ENCODE measurements at regions of chr16 and their contacts with region 1.

Region 1: DNA sequence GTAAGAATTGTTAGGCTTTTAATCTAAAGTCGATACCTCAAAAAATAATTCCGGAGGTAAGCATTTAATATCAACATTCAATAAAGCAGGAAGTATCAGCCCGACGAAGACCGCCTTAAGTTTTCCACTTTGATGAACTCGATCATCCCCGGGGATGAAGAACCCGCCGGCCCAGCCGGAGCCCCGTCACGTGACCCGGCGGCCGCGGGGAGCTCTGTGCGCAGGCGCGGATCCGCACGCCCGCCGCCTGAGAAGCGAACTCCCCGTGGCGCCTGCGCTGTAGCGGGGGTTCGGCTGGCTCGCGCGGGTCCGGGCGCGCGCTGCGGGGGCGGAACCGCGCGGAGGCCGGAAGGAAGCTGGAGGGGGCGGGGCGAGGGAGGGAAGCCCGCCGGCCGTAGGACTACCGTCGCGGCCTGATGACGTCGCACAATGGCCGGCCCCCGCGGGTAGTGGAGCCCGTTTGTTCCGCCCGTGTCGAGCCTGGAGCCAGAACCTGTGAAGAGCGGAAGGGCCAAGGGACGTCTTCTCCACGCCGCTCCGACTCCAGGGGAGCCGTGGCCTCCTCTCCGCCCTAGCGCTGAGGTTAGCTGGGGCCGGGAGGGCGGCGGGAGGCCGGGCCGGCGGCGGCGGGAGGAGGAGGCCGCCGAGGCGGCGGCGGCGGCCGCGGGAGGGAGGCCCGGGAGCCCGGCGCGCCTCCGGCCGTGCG is at the start of gene ZC3H18:
- DNase-seq: peak; percentile 95
- H3K4me3 ChIP-seq: peak within 1 kb of the TSS; percentile 65 to 87
- H3K27ac ChIP-seq: peak within 1 kb of the TSS; percentile 2 to 86
- H3K4me1 ChIP-seq: peaks cover 5% of the 10 kb centered on the region
- H3K27me3 ChIP-seq: no peaks in the 10 kb centered on the region
- CTCF ChIP-seq: no peak
- POLR2A ChIP-seq: no peak
- total RNA-seq, gene ZC3H18: 53.8 to 63.7 TPM

Region 2: DNA sequence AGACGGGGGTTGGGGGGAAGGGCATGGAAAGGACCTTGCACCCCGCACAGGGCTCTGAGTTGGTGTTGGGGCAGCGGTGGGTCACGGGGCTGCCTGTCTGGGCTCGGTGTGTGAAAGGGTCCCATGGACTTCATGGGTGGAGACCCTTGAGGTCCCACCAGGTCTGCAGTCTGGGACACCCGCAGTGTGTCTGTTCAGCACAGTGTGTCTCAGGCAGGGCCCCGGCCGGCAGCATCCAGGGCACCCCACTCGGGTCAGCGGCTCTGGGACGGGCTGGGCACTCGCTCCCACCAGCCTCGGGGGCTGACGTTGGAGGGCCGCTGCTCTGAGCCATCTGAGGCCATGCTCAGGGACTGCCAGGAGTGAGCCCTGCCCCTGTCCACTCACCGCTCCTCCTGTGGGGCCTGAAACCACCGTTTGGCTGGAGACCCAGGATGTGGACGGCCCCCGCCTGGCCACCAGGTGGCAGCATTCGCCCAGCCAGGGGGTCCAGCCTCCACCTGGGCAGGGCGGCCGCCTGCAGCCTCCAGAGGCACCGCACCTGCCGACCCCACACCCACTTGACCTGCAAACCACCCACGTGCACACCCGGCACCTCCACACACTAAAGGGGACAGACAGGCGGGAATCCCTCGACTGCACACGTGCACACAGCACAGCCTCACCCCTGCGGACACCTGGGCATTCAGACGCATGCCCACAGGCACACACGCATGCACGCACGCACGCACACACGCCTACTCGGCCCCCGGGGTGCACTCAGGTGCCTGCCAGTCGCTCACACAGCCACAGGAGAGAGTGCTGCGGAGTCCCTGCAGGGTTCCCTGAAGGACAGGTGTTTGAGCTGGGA is 127.2 kb before region 1 on chr16:
- intact Hi-C with region 1: loop called (anchors 10 kb)
- DNase-seq: peak; percentile 72
- H3K4me3 ChIP-seq: no peak overlapping the region
- H3K27ac ChIP-seq: no peak overlapping the region
- H3K4me1 ChIP-seq: peaks cover 5% of the 10 kb centered on the region
- H3K27me3 ChIP-seq: no peaks in the 10 kb centered on the region
- CTCF ChIP-seq: peak; percentile 94 to 97 (median 95)
- POLR2A ChIP-seq: no peak

Region 3: GRCh38 chr16:88633684-88634140 is 63.6 kb after region 1 on chr16:
- intact Hi-C with region 1: no loop called
- DNase-seq: peak; percentile 36
- H3K4me3 ChIP-seq: peak overlapping the region in 1 of 2 donors; percentile 59
- H3K27ac ChIP-seq: no peak overlapping the region
- H3K4me1 ChIP-seq: no peaks in the 10 kb centered on the region
- H3K27me3 ChIP-seq: no peaks in the 10 kb centered on the region
- CTCF ChIP-seq: no peak
- POLR2A ChIP-seq: no peak

Region 4: GRCh38 chr16:88719267-88719932 is 149.3 kb after region 1 on chr16:
- intact Hi-C with region 1: no loop called
- DNase-seq: peak; percentile 76
- H3K4me3 ChIP-seq: no peak overlapping the region
- H3K27ac ChIP-seq: no peak overlapping the region
- H3K4me1 ChIP-seq: no peaks in the 10 kb centered on the region
- H3K27me3 ChIP-seq: no peaks in the 10 kb centered on the region
- CTCF ChIP-seq: no peak
- POLR2A ChIP-seq: no peak